Activated CD8-positive, alpha-beta T cell treated with anti-CD3 and anti-CD28 coated beads for 36 hours (primary cell): ENCODE measurements at regions of chr1 and their contacts with region 1.

Region 1: DNA sequence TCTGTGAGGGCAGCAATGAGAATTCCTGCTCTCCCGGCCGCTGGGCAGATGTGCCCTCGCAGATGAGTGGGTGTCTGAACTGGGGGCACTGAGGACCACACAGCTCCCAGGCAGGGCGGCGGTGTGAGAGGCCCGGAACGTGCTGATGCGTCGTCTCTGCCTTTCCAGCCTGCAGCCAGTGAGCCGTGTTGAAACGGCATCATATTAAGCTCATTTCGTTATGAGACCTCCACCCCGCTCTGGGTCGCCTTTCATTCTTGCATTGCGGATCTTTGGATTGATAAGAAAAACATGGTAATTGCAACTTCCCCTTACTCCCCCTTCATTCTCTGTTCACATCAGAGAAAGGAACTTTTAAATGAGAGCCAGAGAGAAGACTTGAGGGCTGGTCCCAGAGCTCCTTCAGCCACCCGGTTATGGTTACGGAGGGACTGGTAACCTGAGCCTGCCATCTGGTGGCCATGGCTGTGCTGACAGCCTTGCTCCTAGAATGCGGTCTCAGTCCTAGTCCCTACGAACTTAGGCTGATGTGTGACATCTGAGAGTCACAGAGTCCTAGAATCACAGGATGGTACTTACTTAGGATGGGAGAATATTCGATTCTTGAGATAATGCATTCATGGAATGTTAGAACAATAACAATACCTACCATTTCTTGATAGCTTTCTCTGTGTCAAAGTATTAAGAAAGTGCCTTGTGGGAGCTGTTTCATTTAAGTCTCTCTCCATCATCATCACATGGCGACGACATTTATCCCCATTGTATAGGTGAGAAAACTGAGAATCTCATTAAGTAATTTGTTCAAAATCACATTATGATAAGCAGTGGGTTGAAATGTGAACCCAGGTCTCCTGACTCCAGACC is 271.0 kb downstream of the TRABD2B start:
- DNase-seq: peak; percentile 82
- ATAC-seq: peak; percentile 94
- H3K4me3 Mint-ChIP-seq: peak overlapping the region; percentile 4
- H3K27ac Mint-ChIP-seq: no peak overlapping the region
- H3K4me1 Mint-ChIP-seq: peaks cover 6% of the 10 kb centered on the region
- H3K27me3 Mint-ChIP-seq: peaks cover 34% of the 10 kb centered on the region
- CTCF ChIP-seq: peak; percentile 68

Region 2: DNA sequence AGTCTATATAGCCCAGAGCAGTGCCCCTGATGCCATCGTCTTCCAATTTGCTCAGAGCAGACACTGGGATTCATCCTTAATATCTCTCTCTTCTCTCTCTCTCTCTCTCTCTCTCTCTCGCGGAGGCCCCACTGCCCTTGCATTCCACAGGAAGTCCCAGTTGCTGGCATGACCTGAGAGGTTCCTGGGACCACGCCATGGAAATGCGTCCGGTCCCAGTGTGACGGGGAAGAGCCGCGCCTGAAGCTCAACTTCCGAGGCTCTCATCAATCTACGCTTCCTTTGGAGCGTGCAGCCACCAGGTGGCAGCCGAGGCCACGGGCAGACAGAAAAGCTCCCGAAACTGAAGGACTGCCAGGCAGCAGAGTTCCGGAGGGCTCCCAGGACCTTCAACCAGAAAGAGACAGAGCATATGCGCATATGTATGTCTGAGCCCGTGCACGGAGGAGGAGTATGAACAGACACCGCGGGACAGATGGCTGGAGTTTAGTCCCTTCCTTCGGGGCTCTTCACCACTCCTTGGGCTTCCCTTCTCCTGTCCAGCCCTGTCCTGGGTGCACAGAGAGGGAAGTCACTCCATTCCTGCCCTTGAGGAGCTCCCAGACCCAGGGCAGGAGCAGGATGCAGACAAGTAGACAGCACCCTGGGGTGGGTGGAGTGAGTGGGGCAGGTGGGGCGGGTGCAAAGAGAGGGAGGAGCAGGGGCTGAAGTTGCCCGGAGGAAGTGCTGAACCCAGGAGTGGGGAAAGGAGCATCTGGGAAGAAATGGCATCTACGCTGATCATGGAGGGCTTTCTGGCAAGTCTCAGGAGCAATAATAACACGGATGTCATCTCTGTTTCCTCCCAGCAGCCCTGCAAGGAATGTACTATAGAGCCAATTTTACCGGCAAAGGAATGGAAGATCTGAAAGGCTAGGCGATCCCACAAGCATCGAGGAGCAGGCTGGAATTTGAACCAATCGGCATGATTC is 546.9 kb before region 1 on chr1:
- CTCF ChIA-PET with region 1: interaction called, 10 read pairs
- POLR2A ChIA-PET with region 1: interaction called, 3 read pairs
- intact Hi-C with region 1: no loop called
- DNase-seq: peak; percentile 91
- ATAC-seq: peak; percentile 88
- H3K4me3 Mint-ChIP-seq: peak overlapping the region; percentile 61
- H3K27ac Mint-ChIP-seq: peak overlapping the region; percentile 68
- H3K4me1 Mint-ChIP-seq: peaks cover 8% of the 10 kb centered on the region
- H3K27me3 Mint-ChIP-seq: peaks cover 22% of the 10 kb centered on the region
- CTCF ChIP-seq: peak; percentile 82

Region 3: DNA sequence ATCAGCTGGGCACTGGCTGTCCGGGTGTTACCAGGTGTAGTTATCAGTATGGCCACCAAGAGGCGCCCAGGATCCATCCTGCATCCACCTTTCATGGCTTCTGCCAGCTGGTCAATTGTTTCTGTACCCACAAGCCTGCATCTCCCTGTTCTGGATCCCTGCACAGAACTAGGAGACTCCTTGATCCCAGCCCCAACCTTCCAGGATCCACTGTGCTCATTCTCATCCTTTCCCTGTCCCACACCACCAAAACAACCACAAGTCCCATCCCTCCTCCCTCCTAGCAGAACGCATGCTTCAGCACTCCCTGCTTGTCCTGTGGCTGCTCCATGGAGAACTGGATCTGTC is 337.4 kb before region 1 on chr1:
- CTCF ChIA-PET with region 1: interaction called, 23 read pairs
- POLR2A ChIA-PET with region 1: no interaction called
- intact Hi-C with region 1: no loop called
- DNase-seq: peak; percentile 73
- ATAC-seq: peak; percentile 89
- H3K4me3 Mint-ChIP-seq: no peak overlapping the region
- H3K27ac Mint-ChIP-seq: no peak overlapping the region
- H3K4me1 Mint-ChIP-seq: no peaks in the 10 kb centered on the region
- H3K27me3 Mint-ChIP-seq: no peaks in the 10 kb centered on the region
- CTCF ChIP-seq: peak; percentile 65

Region 4: DNA sequence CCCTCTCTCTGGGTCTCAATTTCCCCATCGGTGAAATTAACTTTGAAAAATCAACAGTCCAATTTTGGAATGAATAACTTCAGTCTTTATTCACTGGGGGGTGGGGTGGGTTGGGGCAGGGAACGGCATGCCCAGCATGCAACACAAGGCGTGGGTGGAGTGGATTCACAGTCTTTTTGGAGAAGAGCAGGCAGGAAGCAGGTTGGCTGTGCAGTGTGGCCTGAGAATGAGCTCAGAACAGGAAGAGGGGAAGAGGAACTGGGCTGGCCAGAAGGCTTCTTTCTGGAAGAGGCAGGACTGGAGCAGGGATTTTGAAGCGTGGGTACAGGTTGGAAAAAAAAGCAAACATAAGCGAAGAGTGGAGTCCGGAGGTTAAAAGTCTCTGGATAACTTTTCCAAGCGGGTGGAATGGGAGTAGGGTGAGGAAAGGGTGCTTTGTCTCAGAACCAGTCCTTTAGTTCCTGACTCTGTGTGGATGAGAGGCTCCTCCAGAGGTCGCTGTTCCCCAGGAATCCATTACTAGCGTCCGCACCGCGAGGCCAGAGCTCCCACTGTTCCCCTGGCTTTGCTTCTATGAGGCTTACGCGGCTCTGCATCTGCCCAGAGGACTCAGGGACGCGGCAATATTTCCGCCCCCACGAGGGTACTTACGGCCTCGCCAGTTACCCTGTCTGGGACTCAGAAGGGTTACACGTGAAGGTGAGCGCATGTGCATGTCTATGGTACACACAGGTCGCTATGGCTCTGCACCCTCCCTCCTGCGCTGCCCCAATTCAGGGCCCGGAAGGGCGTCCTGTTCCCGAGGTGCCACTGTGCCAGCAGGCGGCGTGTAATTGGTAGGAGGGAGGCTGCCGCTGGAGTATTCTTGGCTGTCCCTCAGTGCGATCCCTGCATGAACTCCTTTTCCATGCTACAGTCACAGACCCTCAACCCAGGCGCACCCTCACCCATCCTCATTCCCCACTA is 293.9 kb before region 1 on chr1:
- CTCF ChIA-PET with region 1: interaction called, 47 read pairs
- POLR2A ChIA-PET with region 1: no interaction called
- intact Hi-C with region 1: loop called (anchors 5 kb)
- DNase-seq: peak; percentile 78
- ATAC-seq: peak; percentile 35
- H3K4me3 Mint-ChIP-seq: peak overlapping the region; percentile 43
- H3K27ac Mint-ChIP-seq: no peak overlapping the region
- H3K4me1 Mint-ChIP-seq: peaks cover 44% of the 10 kb centered on the region
- H3K27me3 Mint-ChIP-seq: peaks cover 38% of the 10 kb centered on the region
- CTCF ChIP-seq: peak; percentile 47

Region 5: GRCh38 chr1:47703981-47704596 is 22.1 kb before region 1 on chr1:
- CTCF ChIA-PET with region 1: interaction called, 29 read pairs
- POLR2A ChIA-PET with region 1: no interaction called
- intact Hi-C with region 1: no loop called
- DNase-seq: no peak
- ATAC-seq: no peak
- H3K4me3 Mint-ChIP-seq: no peak overlapping the region
- H3K27ac Mint-ChIP-seq: no peak overlapping the region
- H3K4me1 Mint-ChIP-seq: peaks cover 3% of the 10 kb centered on the region
- H3K27me3 Mint-ChIP-seq: peaks cover 20% of the 10 kb centered on the region
- CTCF ChIP-seq: no peak

Region 6: DNA sequence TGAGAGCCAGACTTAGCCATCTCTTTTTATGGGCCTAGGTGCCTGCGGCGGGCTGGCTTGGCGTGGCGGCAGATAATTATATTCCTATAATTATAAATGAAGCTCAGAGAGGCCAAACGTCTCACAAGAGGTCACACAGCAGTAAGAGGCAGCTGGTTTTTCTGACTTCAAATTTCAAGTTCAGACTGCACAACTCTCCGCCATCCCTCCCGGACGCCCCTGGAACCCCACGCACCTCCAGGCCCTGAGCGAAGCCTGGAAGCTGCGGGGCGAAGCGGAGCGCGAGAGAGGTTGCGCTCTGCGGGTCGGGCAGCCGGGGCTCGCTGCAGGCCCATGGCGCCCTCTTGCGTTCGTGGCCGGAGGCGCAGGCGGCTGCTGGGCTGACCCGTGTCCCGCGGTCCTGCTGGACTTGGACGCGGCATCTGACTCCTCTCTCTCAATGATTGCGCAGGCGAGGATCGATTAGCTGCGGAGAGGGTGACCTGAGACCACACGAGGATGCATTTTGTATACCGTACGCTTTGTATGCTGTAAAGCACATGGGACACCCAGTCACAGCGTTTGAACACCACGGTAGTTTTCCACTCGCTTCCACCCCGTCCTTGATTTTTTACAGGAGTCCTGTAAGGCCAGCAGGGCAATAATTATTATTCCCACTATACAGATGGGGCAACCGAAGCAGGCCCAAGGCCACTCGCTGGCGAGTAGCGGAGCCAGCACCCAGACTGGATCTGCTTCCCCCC is 15.7 kb before region 1 on chr1:
- CTCF ChIA-PET with region 1: interaction called, 31 read pairs
- POLR2A ChIA-PET with region 1: no interaction called
- intact Hi-C with region 1: no loop called
- DNase-seq: peak; percentile 75
- ATAC-seq: peak; percentile 86
- H3K4me3 Mint-ChIP-seq: no peak overlapping the region
- H3K27ac Mint-ChIP-seq: no peak overlapping the region
- H3K4me1 Mint-ChIP-seq: peaks cover 10% of the 10 kb centered on the region
- H3K27me3 Mint-ChIP-seq: peaks cover 60% of the 10 kb centered on the region
- CTCF ChIP-seq: peak; percentile 99

Region 7: GRCh38 chr1:47755101-47755990 is 29.1 kb after region 1 on chr1:
- CTCF ChIA-PET with region 1: interaction called, 22 read pairs
- POLR2A ChIA-PET with region 1: no interaction called
- intact Hi-C with region 1: no loop called
- DNase-seq: peak; percentile 73
- ATAC-seq: peak; percentile 60
- H3K4me3 Mint-ChIP-seq: no peak overlapping the region
- H3K27ac Mint-ChIP-seq: no peak overlapping the region
- H3K4me1 Mint-ChIP-seq: no peaks in the 10 kb centered on the region
- H3K27me3 Mint-ChIP-seq: peaks cover 5% of the 10 kb centered on the region
- CTCF ChIP-seq: peak; percentile 61